AG04449 (cell line): ENCODE measurements at regions of chr5 and their contacts with region 1.

Region 1: DNA sequence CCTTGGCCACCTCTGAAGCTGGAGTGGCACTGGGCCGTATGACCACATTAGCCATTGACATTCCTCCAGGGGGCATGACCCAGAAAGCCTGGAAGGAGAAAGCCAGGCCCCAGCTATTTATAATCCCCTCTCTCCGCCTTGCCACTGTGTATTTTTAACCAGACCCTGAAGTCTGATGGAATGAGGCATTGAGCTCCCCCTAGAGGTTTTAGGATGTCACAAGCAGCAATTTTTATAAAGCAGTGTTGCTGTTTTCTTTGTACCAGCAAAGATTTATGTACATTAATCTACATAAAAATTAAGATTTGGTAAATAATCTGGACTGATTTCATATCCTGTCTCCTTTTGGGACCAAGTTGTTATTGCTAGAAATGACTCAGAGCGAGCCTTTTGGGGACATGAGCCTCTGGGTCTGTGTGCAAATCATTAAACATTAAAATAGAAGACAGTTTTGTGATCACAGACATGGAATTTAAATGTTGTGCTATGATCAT is 127.1 kb downstream of the TRIO start:
- DNase-seq: no peak
- H3K4me3 ChIP-seq: no peak overlapping the region
- CTCF ChIP-seq: peak; percentile 62

Region 2: DNA sequence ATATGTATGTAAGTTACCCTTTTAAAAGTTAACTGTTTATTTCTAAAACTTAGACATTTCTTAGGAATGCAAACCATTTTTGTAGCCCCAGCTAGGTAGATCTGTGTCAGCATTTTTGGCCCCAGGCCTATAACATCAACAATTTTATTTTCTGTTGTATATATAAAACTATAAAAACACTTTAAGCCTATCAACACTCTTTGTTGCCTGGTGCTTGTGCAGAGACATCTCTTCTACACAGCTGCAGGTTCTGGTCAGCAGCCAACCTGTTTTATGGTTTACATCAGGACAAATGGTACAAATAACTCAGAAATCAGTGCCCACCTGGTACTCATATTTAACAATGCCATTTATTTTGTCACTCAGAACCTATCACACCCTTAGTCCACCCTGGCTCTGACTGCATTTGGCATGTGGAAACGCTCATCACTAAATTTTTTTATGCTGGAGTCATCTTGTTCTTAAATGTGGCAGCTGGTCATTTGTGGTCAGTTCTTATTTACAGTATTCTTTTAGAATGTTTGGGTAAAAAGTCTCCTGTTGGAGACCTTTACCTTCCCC is 499.2 kb before region 1 on chr5:
- CTCF ChIA-PET with region 1: no interaction called
- POLR2A ChIA-PET with region 1: no interaction called
- DNase-seq: no peak
- H3K4me3 ChIP-seq: no peak overlapping the region
- CTCF ChIP-seq: no peak

Region 3: DNA sequence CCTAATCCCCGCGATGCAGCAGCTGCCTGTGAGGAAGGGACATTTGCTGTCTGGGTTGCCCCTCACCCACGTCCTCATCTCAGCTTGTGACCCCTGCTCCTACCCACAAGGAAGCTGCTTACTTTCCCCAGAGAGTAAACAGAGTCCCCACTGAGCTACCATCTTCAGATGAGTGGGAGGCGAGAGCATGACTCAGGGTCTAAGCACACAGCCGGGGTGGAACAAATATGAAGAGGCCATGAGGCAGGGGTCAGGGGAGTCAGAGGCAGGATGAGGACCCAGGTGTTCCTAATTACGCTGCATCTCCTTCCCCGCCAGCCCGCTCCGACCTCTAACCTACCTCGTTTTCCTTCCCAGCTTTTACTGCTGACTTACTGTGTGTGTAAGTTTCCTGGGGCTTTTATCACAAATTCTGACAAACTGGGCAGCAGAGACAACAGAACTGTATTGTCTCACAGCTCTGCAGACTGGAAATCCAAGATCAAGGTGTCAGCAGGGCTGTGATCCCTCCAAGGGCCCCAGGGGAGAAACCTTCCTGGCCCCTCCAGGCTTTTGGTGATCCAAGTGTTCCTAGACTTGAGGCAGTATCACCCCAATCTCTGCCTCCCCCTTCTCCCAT is 231.8 kb before region 1 on chr5:
- CTCF ChIA-PET with region 1: interaction called, 10 read pairs
- POLR2A ChIA-PET with region 1: interaction called, 3 read pairs
- DNase-seq: peak; percentile 67
- H3K4me3 ChIP-seq: no peak overlapping the region
- CTCF ChIP-seq: no peak

Region 4: DNA sequence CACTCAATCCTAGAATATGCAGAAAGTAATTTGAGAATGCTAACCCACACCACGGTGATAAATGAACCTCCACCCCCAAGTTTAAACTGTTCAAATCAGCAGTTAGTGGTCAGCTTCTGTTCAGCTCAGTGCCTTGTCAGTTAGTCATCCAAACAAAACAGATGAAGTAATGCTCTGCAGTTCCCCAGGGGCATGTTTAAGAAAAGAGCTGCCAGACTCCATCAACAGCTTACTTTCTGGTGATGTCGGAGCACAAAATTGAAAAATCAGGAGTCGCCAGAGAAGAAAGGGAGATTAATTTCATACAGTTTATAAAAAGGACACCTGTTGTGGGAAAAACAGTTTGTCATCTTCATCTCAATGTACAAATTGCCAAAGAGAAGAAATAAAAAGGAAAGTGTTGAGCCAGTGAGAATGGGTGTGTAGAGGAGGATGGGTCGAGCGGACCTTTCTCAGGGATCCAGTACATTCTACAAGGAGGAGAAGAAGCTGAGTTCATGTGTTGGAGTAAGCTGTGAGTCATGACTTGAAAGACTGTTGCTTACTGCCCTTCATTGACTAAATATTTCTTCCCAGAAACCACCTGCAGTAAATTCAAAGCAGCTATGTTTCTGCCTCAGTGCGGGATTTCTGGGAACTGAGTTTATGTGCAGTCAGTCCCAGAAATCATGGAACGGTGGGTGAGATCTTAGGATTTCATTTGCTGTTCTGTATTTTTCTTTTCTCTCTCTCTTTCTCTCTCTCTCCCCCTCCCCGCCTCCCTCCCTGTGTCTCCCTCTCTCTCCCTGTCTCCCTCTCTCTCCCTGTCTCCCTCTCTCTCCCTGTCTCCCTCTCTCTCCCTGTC is 113.4 kb before region 1 on chr5:
- CTCF ChIA-PET with region 1: interaction called, 51 read pairs
- POLR2A ChIA-PET with region 1: interaction called, 3 read pairs
- DNase-seq: peak; percentile 96
- H3K4me3 ChIP-seq: peak overlapping the region; percentile 44
- CTCF ChIP-seq: no peak

Region 5: DNA sequence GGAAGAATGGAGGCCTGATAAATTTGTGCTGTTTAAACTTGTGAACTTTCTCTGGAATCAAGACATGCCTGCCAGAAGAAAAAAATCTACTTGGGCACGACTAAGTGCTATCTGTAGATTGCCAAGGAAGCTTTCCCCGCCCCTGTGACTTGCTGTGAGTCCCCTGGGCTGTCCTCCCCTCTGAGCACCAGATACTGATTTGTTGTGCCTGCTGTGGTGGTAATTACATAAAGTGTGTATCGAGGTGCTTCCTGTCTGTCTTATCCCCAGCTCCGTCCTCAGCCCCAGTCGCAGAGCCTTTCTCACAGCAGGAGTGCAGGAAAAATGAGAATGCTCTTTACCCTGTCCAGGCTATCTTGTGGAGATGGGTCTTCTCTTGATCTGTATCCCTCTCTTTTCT is 73.2 kb before region 1 on chr5:
- CTCF ChIA-PET with region 1: interaction called, 11 read pairs
- POLR2A ChIA-PET with region 1: interaction called, 4 read pairs
- DNase-seq: no peak
- H3K4me3 ChIP-seq: no peak overlapping the region
- CTCF ChIP-seq: no peak

Region 6: DNA sequence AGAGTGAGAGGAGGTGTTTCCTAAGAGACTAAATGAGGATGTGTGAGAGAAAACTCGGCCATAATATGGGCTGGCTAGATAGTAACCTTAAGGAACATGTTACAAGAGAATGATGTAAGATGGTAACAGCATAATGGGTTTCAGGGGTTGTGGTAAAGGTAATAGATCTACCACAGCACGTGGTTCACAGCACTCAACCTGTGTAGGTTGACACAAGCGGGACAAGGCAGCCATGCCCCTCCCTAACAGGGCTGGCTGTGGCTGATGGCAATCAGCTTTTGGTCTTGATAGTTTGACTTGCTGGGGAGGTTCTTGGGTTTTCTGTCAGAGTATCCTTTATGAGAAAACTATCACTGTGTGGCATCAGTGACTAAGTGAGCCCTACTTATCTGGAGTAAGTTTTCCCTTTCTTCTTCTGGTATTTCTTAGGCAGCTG is 11.5 kb after region 1 on chr5:
- CTCF ChIA-PET with region 1: interaction called, 70 read pairs
- POLR2A ChIA-PET with region 1: interaction called, 3 read pairs
- DNase-seq: no peak
- H3K4me3 ChIP-seq: no peak overlapping the region
- CTCF ChIP-seq: no peak